Mucosa of descending colon (tissue), 3 donors: ENCODE measurements at regions of chr22 and their contacts with region 1.

Region 1: GRCh38 chr22:31080848-31081649 is at the start of gene SMTN:
- DNase-seq: peak; percentile 95 to 98 (median 98)
- ATAC-seq: peak; percentile 73
- H3K4me3 ChIP-seq: peak within 1 kb of the TSS; percentile 41
- H3K4me1 ChIP-seq: peaks cover 49% of the 10 kb centered on the region
- CTCF ChIP-seq: peak; percentile 11
- total RNA-seq, gene SMTN: 63.6 to 799 (median 104) TPM

Region 2: DNA sequence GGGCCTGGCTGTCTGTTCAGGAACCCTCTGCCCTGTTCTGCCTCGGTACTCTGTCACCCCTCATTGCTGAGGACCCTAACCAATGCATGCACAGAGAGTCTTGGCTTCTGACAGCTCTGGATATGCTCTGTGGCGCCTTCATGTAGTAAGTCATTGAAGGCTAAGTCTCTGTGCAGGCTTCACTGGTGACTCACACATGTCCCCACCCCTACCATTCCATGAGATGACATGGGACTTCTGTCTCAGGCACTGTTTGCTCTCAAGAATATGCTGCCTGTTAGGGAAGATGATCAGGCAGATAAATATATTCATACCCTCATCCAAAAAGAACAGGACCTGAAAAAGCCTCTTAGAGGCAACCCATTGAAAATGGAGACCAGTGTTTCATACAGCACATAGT is 1044.4 kb before region 1 on chr22:
- intact Hi-C with region 1: no loop called
- DNase-seq: no peak
- ATAC-seq: peak; percentile 87
- H3K4me3 ChIP-seq: no peak overlapping the region
- H3K4me1 ChIP-seq: no peaks in the 10 kb centered on the region
- CTCF ChIP-seq: no peak

Region 3: GRCh38 chr22:30947816-30948454 is 133.1 kb before region 1 on chr22:
- intact Hi-C with region 1: loop called (anchors 5 kb)
- DNase-seq: no peak
- ATAC-seq: peak; percentile 80
- H3K4me3 ChIP-seq: no peak overlapping the region
- H3K4me1 ChIP-seq: no peaks in the 10 kb centered on the region
- CTCF ChIP-seq: no peak